ENCODE measurements at regions of chrX and their contacts with region 1.

Region 1: GRCh38 chrX:15674841-15675489 is 10.4 kb upstream of the CLTRN start:
- DNase-seq: peak; percentile 75
- ATAC-seq: peak; percentile 83
- H3K4me3 Mint-ChIP-seq: no peak overlapping the region
- H3K27ac Mint-ChIP-seq: no peak overlapping the region
- H3K4me1 Mint-ChIP-seq: peaks cover 13% of the 10 kb centered on the region
- H3K27me3 Mint-ChIP-seq: no peaks in the 10 kb centered on the region
- CTCF ChIP-seq: no peak

Region 2: DNA sequence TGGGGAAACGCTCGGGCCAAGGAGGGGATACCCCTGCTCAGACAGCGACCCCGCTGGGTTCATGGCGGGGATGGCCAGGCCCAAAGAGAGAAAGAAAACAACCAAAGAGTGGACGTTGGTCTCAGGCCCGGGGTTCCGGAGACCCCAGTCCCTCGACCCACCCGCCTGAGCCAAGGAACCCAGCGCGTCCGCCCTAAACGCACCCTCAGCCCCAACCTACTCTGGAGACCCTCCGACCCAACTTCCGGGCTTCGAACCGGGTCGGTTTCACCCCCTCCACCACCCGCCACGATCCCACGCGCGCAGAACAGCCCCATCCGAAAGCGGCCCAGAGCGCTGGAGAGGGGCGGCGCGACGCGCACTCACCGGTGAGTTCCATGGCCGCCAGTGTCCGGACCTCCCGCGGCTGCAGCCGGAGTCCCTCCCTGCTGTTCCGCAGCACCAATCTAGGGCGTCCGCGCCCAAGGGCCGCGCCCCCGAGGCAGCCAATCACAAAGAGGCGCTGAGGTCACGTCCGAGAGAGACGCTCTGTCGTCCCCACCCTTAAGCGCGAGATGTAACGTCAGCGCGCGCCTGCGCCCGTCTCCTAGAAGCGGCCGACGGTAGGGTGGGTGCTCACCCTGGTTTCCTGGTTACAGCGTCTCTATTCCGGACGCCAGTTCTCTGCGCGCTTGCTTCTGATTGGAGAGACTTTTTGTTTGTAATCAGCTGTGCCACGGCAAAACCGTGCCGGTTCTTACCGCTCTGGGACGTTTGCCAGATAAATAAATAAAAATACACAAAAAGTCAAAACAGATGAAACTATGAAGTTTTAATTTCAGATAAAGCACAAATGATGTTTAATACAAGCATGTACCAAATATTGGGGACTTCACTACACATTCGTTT is 339.6 kb before region 1 on chrX and contains the start of gene PIGA:
- CTCF ChIA-PET with region 1: no interaction called
- POLR2A ChIA-PET with region 1: no interaction called
- intact Hi-C with region 1: loop called (anchors 1 kb)
- DNase-seq: peak; percentile 77
- ATAC-seq: peak; percentile 94
- H3K4me3 Mint-ChIP-seq: peak within 1 kb of the TSS; percentile 94
- H3K27ac Mint-ChIP-seq: peak within 1 kb of the TSS; percentile 91
- H3K4me1 Mint-ChIP-seq: peaks cover 19% of the 10 kb centered on the region
- H3K27me3 Mint-ChIP-seq: no peaks in the 10 kb centered on the region
- CTCF ChIP-seq: no peak
- total RNA-seq, gene PIGA: 15.7 and 24.9 TPM in 2 replicates

Region 3: DNA sequence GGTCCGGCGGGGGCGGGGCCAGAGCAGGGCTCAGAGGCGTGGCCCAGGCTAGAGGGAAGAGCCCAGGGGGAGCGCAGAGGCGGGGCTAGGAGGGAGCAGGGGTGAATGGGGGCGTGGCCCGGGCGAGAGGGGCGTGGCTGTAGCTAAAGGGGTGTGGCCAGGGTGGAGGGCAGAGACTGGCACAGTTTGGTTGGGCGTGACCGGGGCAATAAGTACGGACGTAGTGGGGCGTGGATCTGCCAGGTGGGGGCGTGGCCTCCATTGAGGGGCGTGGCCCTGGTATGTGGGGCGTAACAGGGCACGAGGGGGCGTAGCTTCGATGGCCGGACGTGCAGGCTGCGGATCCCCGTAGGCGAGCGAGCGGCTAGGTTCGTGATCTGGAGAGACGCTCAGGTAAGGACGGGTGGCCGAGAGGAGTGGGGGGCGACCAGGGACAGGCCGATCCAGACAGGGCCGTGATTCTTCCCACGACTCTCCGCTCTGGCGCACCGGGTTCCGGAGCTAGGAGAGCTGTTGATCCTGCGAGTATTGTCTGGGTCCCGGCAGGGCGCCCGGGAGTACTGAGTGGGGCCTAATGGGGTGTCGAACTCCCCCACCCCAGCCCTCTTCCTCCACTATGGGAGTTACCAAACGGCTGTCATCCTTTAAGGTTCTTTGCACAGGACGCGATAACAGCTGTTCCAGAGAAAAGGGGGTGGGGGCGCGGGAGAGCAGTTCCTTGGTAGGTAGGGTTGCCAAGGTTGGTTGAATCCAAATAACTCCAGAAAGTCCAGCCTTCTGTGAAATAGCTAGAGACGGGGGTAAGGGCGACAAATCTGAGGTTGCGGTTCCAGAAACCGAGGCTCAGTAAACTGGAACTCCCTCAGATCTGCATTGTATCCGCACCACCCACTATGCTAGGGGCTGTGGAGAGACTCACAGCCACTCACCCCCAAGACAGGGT is 63.3 kb after region 1 on chrX and contains the start of gene CA5B:
- CTCF ChIA-PET with region 1: no interaction called
- POLR2A ChIA-PET with region 1: interaction called, 19 read pairs
- intact Hi-C with region 1: loop called (anchors 1 kb)
- DNase-seq: peak; percentile 97
- ATAC-seq: peak; percentile 94
- H3K4me3 Mint-ChIP-seq: peak within 1 kb of the TSS; percentile 88
- H3K27ac Mint-ChIP-seq: peak within 1 kb of the TSS; percentile 80
- H3K4me1 Mint-ChIP-seq: peaks cover 33% of the 10 kb centered on the region
- H3K27me3 Mint-ChIP-seq: no peaks in the 10 kb centered on the region
- CTCF ChIP-seq: no peak
- total RNA-seq, gene CA5B: 9.9 and 10.6 TPM in 2 replicates

Region 4: DNA sequence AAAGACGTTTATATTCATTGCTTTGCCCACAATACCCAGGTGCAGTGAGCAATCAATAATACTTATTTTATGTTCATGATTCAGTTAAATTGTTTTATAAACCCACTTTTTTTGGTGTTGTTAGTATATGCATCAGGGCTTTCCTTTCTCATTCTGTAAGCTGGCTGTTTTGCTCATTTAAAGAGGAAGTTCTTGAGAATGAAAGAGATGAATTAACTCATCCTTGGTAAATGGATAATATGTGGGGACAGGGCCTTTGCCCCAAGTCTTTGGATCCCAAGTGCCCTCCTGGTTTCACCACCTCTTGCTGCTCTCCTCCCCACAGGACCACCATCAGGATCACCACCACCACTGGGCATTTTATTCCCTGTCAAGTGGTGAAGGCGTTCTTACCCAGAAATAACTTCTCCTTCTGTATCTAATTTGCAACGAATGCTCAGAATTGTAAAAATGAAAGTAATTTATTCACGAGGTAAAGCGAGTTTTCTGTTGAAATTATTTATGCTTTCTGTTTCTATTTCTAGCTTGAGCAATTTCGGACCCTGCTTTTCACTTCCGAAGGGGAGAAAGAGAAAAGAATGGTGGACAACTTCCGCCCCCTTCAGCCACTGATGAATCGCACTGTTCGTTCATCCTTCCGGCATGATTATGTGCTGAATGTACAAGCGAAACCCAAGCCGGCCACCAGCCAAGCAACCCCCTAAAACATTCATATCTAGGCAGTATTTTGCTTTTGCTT is 107.2 kb after region 1 on chrX:
- CTCF ChIA-PET with region 1: no interaction called
- POLR2A ChIA-PET with region 1: interaction called, 5 read pairs
- intact Hi-C with region 1: loop called (anchors 1 kb)
- DNase-seq: no peak
- ATAC-seq: peak; percentile 81
- H3K4me3 Mint-ChIP-seq: peak overlapping the region; percentile 83
- H3K27ac Mint-ChIP-seq: peak overlapping the region; percentile 98
- H3K4me1 Mint-ChIP-seq: peaks cover 16% of the 10 kb centered on the region
- H3K27me3 Mint-ChIP-seq: no peaks in the 10 kb centered on the region
- CTCF ChIP-seq: no peak

Region 5: GRCh38 chrX:15854712-15855567 is 180.0 kb after region 1 on chrX and contains the start of gene AP1S2:
- CTCF ChIA-PET with region 1: no interaction called
- POLR2A ChIA-PET with region 1: interaction called, 11 read pairs
- intact Hi-C with region 1: loop called (anchors 1 kb)
- DNase-seq: peak; percentile 88
- ATAC-seq: peak; percentile 90
- H3K4me3 Mint-ChIP-seq: peak within 1 kb of the TSS; percentile 91
- H3K27ac Mint-ChIP-seq: peak within 1 kb of the TSS; percentile 98
- H3K4me1 Mint-ChIP-seq: peaks cover 31% of the 10 kb centered on the region
- H3K27me3 Mint-ChIP-seq: no peaks in the 10 kb centered on the region
- CTCF ChIP-seq: no peak
- total RNA-seq, gene AP1S2: 42.3 and 45.9 TPM in 2 replicates

Region 6: DNA sequence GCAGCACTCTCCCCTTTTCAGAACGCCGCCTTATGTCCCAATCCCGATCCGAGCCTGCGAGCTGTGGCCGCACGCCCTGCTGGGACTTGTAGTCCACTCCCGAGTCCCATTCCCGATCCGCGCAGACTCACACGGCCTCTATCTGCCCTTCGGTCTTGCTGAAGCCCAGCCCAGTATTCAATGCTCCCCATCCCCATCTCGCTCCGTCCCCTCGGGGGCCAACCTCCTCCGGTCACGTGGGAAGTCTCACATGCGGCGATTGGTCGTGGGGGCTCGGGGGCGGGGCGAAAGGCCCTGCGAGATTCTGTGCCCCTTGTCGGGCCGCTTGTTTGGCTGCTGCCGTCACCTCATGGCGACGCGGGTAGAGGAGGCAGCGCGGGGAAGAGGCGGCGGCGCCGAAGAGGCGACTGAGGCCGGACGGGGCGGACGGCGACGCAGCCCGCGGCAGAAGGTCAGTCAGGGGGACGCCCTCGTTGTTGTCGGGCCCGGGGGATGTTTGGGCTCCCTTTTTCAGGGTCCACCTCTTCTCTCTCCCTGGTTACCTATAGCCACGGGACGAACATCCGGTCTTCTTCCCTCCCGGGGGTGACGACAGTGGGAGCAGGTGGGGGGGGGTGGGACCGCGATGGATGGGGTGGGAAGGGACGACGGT is 1111.3 kb after region 1 on chrX and contains the start of gene TXLNG:
- CTCF ChIA-PET with region 1: no interaction called
- POLR2A ChIA-PET with region 1: no interaction called
- intact Hi-C with region 1: loop called (anchors 10 kb)
- DNase-seq: peak; percentile 81
- ATAC-seq: peak; percentile 95
- H3K4me3 Mint-ChIP-seq: peak within 1 kb of the TSS; percentile 97
- H3K27ac Mint-ChIP-seq: peak within 1 kb of the TSS; percentile 90
- H3K4me1 Mint-ChIP-seq: peaks cover 18% of the 10 kb centered on the region
- H3K27me3 Mint-ChIP-seq: no peaks in the 10 kb centered on the region
- CTCF ChIP-seq: no peak
- total RNA-seq, gene TXLNG: 12.7 and 13.1 TPM in 2 replicates

Measured in activated B cell treated with CpG ODN at 0.5 μM for 24 hours (primary cell).